Head of caudate nucleus (tissue), 42 donors: ENCODE measurements at regions of chr19 and their contacts with region 1.

Region 1: GRCh38 chr19:49363268-49364082 is at the start of gene DKKL1:
- DNase-seq: peak in 37 of 42 donors; percentile 8 to 74 (median 32)

Region 2: DNA sequence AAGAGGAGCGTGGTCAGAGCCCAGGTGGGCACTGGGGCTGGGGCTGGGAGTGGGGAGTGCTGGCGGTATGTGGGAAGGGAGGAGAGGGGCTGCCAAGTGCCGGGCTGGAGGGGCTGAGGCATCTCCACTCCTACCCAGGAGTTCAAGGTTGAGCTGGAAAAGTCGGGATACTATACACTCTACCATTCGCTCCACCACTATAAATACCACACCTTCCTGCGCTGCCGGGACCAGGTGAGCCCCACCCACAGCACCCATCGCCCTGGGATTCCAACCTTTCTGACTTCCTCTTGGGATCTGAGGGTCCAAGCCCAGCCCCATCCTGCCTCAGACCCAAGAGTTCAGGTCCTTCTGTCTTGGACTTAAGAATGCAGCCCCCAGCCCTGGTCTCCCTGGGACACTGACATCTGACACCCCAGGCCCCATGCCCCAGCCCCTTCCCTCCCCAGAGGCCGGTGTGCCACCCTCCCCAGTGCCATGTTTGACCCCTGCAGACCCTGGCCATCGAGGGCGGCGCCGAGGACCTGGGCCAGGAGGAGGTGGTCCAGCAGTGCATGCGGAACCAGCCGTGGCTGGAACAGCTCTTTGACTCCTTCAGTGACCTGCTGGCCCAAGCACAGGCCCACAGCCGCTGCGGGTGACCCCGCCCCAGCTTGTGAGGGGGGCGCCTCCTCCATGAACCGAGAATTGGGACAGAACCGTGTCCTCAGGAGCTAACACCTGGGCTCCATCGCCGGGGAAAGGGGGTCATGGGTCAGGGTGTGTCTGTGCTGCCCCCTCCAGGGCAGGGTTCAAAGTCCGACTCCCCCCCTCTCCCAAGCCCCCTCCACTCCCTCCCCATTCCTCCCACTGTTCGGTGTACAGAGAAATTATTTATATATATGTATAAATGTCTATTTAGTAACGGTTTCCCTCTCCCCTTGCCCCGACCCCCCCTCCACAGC is 261.8 kb after region 1 on chr19:
- intact Hi-C with region 1: loop called (anchors 5 kb)
- DNase-seq: no peak